ENCODE measurements at regions of chr9 and their contacts with region 1.

Region 1: DNA sequence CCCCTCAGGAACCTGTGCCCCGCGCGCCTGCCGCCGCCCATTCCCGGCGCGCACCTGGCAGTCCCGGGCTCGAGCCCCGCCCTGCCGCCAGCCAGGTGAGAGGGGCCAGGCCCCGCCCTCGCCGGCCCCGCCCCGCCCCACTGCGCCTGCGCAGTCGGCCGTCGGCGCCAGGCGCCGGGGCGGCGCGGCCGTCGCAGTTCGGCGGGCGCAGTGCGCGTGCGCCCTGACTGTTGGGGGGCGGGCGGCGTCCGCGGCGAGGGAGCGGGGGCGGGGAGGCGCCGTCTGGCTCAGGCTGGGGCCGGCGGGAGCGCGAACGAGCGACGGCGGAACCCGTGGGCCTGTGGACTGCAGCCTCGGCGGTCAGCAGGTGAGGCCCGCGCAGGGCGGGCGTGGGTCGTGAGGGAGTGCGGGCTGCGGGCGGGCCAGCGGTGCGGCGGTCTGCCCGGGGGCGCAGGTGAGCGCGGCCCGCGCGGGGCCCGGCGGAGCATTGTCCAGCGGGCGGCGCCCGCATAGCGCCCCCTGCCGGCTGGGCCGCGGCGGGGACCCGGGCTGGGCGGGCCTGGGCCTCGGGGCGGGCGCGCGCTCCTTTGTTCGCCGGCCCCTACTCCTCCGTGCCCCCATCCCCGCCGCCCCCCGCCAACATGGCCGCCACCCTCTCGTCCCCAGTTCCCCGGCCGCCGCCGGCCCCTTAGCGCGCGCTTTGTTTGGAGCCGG is at the start of gene SPIN1:
- DNase-seq: peak; percentile 73
- H3K4me3 Mint-ChIP-seq: peak within 1 kb of the TSS; percentile 99
- H3K27ac Mint-ChIP-seq: peak within 1 kb of the TSS; percentile 94
- H3K4me1 Mint-ChIP-seq: peaks cover 26% of the 10 kb centered on the region
- H3K27me3 Mint-ChIP-seq: no peaks in the 10 kb centered on the region
- CTCF ChIP-seq: peak; percentile 45
- total RNA-seq, gene SPIN1: 75.1 and 80.9 TPM in 2 replicates

Region 2: GRCh38 chr9:87701931-87702421 is 686.4 kb before region 1 on chr9:
- CTCF ChIA-PET with region 1: no interaction called
- POLR2A ChIA-PET with region 1: no interaction called
- intact Hi-C with region 1: no loop called
- DNase-seq: no peak
- H3K4me3 Mint-ChIP-seq: no peak overlapping the region
- H3K27ac Mint-ChIP-seq: no peak overlapping the region
- H3K4me1 Mint-ChIP-seq: peaks cover 5% of the 10 kb centered on the region
- H3K27me3 Mint-ChIP-seq: no peaks in the 10 kb centered on the region
- CTCF ChIP-seq: no peak

Region 3: GRCh38 chr9:88076286-88077090 is 311.8 kb before region 1 on chr9:
- CTCF ChIA-PET with region 1: interaction called, 4 read pairs
- POLR2A ChIA-PET with region 1: interaction called, 20 read pairs
- intact Hi-C with region 1: loop called (anchors 5 kb)
- DNase-seq: peak; percentile 97
- H3K4me3 Mint-ChIP-seq: peak overlapping the region; percentile 85
- H3K27ac Mint-ChIP-seq: peak overlapping the region; percentile 95
- H3K4me1 Mint-ChIP-seq: peaks cover 31% of the 10 kb centered on the region
- H3K27me3 Mint-ChIP-seq: no peaks in the 10 kb centered on the region
- CTCF ChIP-seq: no peak

Region 4: GRCh38 chr9:88173378-88173999 is 214.8 kb before region 1 on chr9:
- CTCF ChIA-PET with region 1: interaction called, 3 read pairs
- POLR2A ChIA-PET with region 1: no interaction called
- intact Hi-C with region 1: loop called (anchors 1 kb)
- DNase-seq: peak; percentile 87
- H3K4me3 Mint-ChIP-seq: no peak overlapping the region
- H3K27ac Mint-ChIP-seq: no peak overlapping the region
- H3K4me1 Mint-ChIP-seq: peaks cover 5% of the 10 kb centered on the region
- H3K27me3 Mint-ChIP-seq: peaks cover 33% of the 10 kb centered on the region
- CTCF ChIP-seq: peak; percentile 85

Region 5: DNA sequence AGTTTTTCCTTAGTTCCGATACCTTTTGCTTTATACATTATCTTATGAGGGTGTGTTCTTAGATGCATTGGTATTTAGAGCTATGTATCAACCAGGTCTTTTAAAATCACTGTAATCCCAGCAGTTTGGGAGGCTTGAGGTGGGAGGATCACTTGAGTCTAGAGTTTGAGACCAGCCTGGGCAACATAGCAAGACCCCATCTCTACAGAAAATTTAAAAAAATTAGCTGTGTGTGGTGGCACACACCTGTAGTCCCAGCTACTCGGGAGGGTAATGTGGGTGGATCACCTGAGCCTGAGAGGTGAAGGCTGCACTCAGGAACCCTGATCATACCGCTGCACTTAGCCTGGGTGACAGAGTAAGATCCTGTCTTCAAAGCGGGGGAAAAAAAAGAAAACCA is 15.0 kb after region 1 on chr9:
- CTCF ChIA-PET with region 1: interaction called, 4 read pairs
- POLR2A ChIA-PET with region 1: interaction called, 13 read pairs
- intact Hi-C with region 1: no loop called
- DNase-seq: no peak
- H3K4me3 Mint-ChIP-seq: no peak overlapping the region
- H3K27ac Mint-ChIP-seq: no peak overlapping the region
- H3K4me1 Mint-ChIP-seq: peaks cover 21% of the 10 kb centered on the region
- H3K27me3 Mint-ChIP-seq: no peaks in the 10 kb centered on the region
- CTCF ChIP-seq: no peak

Region 6: DNA sequence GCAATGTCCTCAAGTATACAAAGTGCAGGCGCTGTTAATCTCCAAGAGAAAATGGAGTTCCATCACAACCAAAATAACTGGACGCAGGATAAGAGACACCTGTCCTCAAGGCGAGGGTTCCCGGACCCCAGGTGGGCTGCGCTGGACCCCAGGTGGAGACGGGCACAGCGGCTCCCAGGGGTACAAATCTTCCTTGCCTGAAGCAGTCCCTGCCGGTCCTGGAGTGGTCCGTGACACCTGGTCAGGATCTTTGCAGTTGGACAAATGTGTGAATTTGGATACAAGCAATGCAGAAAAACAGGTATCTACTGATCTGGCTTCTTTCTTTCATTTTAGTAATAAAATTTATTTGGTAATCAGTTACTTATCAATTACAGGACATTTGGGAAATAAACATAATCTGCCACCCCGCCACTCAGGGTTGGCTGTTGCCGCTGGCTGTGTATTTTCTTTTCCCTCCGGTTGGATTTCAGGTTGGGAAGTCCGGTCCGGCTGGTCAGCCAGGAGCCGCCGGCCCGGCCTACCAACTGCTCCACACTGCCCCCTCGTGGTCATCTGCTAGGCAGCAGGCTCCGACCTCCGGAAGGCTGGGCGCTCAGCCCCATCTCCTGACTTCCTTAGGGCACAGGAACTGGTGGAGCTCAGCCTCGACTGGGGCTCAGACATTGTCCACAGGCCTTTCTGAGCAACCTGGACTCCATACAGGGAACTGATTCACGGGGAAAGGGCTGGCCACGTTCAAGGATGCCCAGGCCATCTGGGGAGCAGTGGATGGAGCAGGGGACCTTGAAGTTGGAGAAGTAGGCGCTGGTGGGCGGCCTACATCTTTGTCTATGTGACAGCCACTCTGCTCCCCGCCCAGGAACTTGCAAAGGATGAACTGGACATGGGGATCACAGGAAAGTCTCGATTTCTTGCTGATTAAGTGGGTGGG is 190.1 kb after region 1 on chr9:
- CTCF ChIA-PET with region 1: interaction called, 3 read pairs
- POLR2A ChIA-PET with region 1: no interaction called
- intact Hi-C with region 1: loop called (anchors 1 kb)
- DNase-seq: peak; percentile 79
- H3K4me3 Mint-ChIP-seq: peak overlapping the region; percentile 61
- H3K27ac Mint-ChIP-seq: no peak overlapping the region
- H3K4me1 Mint-ChIP-seq: peaks cover 21% of the 10 kb centered on the region
- H3K27me3 Mint-ChIP-seq: no peaks in the 10 kb centered on the region
- CTCF ChIP-seq: peak; percentile 89

Region 7: DNA sequence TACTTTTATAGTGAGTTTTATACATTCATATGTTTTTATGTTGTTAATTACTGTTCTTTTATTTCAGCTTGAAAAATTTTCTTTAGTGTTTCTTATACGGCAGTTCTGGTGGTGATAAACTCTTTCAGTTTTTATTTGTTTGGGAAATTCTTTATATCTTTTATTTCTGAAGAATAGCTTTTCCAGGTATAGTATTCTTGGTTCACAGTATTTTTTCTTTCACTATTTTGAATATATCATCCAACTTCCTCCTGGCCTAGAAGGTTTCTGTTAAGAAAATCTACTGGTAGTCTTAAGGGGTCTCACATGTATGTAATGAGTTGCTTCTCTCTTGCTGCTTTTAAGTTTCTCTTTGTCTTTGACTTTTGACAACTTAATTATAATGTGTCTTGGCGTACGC is 226.0 kb after region 1 on chr9:
- CTCF ChIA-PET with region 1: no interaction called
- POLR2A ChIA-PET with region 1: no interaction called
- intact Hi-C with region 1: no loop called
- DNase-seq: no peak
- H3K4me3 Mint-ChIP-seq: no peak overlapping the region
- H3K27ac Mint-ChIP-seq: no peak overlapping the region
- H3K4me1 Mint-ChIP-seq: no peaks in the 10 kb centered on the region
- H3K27me3 Mint-ChIP-seq: no peaks in the 10 kb centered on the region
- CTCF ChIP-seq: no peak

Region 8: DNA sequence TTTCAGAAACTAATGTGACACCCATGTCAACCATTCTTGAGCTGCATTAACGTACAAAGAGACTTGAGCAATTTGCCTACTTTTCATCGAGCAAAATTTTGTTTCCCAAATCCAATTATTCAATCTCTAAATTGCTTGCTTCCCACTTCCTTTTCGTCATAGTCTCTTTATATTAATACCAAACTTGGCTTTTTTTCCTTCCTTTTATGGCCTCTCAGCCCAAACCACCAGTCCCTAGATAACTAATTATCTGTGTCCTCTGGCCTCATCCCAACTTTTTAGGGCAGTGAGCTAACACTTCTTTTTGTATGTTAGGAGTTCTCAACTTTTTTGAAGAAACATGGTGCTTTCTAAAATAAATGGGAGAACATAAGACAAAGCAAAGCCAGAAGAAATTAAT is 447.4 kb after region 1 on chr9:
- CTCF ChIA-PET with region 1: no interaction called
- POLR2A ChIA-PET with region 1: no interaction called
- intact Hi-C with region 1: no loop called
- DNase-seq: no peak
- H3K4me3 Mint-ChIP-seq: no peak overlapping the region
- H3K27ac Mint-ChIP-seq: no peak overlapping the region
- H3K4me1 Mint-ChIP-seq: peaks cover 15% of the 10 kb centered on the region
- H3K27me3 Mint-ChIP-seq: no peaks in the 10 kb centered on the region
- CTCF ChIP-seq: no peak

Measured in MCF 10A (cell line).